Calu3 (cell line): ENCODE measurements at regions of chr12 and their contacts with region 1.

Region 1: DNA sequence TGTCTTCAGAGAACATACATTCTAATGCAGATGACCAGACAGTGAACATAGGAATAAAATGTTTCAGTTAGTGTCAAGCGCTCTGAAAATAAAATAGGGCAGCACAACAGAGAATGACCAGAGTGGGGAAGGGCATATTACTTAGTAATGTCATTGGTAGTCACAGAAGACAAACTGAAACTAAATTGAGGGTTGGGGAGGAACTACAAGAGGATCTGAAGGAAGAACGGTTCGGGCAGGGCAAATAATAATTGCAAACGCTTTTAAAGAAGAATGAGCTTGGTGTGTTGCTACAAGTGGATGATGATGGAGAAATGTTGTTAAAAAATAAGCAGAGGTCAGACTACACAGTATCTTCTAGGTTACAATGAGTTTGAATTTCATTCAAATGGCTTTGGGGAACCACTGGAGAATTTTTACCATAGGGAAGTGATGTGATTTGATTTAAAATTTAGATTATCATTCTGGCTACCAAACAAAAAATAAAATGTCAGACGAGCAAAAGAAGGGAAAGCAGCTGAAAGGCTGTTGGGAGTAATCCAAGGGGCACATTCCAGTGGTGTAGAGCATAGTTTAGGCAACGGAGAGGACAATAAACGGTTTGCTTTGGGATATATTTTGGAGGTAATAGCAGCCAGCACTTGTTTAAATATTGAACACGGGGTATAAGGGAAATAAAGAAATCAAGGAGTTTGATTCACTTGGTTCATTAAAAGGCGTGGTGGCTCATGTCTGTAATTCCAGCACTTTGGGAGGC is 56.3 kb upstream of the SLC6A13 start:
- DNase-seq: no peak
- H3K4me3 Mint-ChIP-seq: no peak overlapping the region
- H3K27ac Mint-ChIP-seq: no peak overlapping the region
- H3K4me1 Mint-ChIP-seq: no peaks in the 10 kb centered on the region
- H3K27me3 Mint-ChIP-seq: no peaks in the 10 kb centered on the region
- CTCF ChIP-seq: no peak

Region 2: DNA sequence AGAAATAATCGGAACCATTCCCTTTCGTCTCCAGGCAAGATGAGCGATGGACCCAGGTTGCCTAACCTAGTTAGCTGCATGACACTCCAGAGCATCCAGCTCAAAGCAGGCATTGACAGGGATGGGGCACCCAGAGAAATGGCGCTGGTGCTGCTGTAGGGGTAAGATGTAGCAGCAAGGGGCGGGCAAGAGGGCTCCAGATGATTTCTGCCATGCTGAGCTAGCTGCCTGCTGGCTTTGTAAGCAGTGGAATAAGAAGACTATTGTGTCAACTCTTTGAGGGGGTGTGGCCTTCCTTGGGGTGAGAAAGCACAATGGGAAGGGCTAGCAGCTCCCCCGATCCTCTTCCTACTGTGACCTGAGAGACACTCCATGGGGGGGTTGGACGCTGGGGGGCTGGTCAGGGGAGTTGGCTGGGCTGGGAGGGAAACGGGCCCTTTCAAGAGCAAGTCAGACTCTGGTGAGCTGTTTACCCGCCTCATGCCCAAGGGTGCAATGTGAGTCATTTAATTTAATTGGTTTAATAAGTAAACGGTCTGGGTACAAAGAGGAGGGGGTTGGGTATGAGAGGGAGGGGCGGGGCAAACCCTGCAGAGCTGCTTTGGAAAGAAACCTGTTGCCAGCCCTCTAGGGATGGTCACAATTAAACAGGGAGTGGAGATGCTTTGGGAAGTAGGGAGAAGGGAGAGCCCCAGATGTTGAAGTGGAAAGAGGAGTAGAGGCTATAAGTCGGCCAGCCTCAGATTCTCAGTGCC is 191.3 kb after region 1 on chr12:
- CTCF ChIA-PET with region 1: no interaction called
- intact Hi-C with region 1: loop called (anchors 5 kb)
- DNase-seq: peak; percentile 77
- H3K4me3 Mint-ChIP-seq: peak overlapping the region; percentile 51
- H3K27ac Mint-ChIP-seq: peak overlapping the region; percentile 73
- H3K4me1 Mint-ChIP-seq: peaks cover 48% of the 10 kb centered on the region
- H3K27me3 Mint-ChIP-seq: no peaks in the 10 kb centered on the region
- CTCF ChIP-seq: no peak

Region 3: DNA sequence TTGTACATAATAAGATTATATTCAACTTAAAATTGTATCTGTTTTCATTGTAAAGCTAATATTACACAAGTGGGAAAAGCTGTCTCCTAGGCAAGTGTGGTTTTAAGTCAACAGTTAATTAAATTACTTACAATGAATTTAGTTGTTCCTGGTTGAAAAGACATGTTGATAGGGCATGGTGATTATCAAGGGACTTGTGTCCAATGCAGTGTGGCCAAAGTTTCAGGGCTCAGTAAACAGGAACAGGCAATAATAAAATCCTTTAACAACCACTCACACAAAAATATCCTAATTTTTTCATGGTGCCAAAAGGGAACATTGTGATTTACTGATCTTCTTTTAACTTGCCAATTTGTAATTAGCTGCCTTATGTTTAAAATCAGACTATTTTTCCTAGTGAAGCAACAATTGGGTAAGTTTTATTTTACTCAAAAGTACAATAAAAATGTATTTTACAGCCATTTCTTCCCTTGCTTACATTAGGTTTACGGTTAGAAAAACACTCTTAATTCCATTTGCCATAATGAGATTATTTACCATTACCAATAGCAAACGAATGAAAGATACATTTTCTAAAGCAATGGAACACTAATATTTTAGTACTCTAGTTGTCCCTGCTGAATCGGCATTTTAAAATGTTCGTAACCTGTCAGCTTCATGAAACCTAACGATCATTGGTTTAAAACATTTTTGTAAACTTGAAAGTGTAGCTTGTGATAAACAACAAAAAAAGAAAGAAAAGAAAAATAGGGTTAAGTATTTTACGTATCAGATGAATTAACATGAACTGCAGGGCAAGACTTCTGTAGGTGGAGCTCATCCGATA is 431.6 kb after region 1 on chr12:
- CTCF ChIA-PET with region 1: no interaction called
- intact Hi-C with region 1: no loop called
- DNase-seq: no peak
- H3K4me3 Mint-ChIP-seq: peak overlapping the region; percentile 13
- H3K27ac Mint-ChIP-seq: no peak overlapping the region
- H3K4me1 Mint-ChIP-seq: peaks cover 10% of the 10 kb centered on the region
- H3K27me3 Mint-ChIP-seq: no peaks in the 10 kb centered on the region
- CTCF ChIP-seq: no peak